CD4-positive, alpha-beta memory T cell (primary cell): ENCODE measurements at regions of chr22 and their contacts with region 1.

Region 1: GRCh38 chr22:30089655-30089974 is 9.4 kb downstream of the HORMAD2 start:
- DNase-seq: no peak
- H3K4me3 ChIP-seq: no peak overlapping the region
- H3K4me3 Mint-ChIP-seq: no peak overlapping the region
- H3K27ac ChIP-seq: no peak overlapping the region
- H3K27ac Mint-ChIP-seq: no peak overlapping the region
- H3K4me1 ChIP-seq: peaks cover 11% of the 10 kb centered on the region
- H3K4me1 Mint-ChIP-seq: peaks cover 7 to 12% (median 9%) of the 10 kb centered on the region in 4 donors
- H3K27me3 ChIP-seq: no peaks in the 10 kb centered on the region
- H3K27me3 Mint-ChIP-seq: peaks cover 1 to 2% of the 10 kb centered on the region in 2 donors

Region 2: DNA sequence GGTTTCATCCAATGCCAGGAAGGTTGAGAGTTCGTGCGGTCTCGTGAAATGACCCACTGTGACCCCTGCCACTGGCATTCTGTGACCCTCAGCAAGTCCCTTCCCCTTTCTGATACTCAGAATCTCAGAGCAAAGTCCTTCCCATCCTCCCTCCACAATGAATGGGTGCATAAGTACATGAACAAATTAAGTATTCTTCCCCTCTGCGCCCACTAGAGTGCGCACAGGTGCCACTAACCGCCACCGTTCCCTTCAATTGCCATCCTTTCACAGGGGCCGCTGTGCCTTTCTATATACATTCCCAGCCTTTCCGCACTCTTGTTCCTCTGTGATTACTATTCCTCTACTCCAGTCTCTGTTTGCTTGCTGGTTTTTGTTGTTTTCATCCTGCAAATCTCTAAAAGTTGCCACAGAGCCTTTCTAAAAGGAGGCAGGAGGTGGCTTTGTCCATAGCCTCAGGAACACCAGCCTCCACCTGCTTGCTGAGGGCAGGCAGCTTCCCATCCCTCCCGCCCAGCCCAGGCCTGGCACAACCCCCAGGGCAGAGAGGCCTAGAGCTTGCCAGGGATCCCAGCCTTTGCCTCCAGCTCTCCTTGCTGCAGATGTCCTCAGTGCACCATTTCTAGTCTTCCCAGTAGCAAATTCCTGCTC is 694.6 kb before region 1 on chr22:
- CTCF ChIA-PET with region 1: no interaction called
- POLR2A ChIA-PET with region 1: no interaction called
- intact Hi-C with region 1: loop called (anchors 2 kb)
- DNase-seq: peak; percentile 50 to 65 (median 60)
- H3K4me3 ChIP-seq: no peak overlapping the region
- H3K4me3 Mint-ChIP-seq: peak overlapping the region in 1 of 8 donors; percentile 3
- H3K27ac ChIP-seq: no peak overlapping the region
- H3K27ac Mint-ChIP-seq: peak overlapping the region in 1 of 7 donors; percentile 43
- H3K4me1 ChIP-seq: peaks cover 3% of the 10 kb centered on the region
- H3K4me1 Mint-ChIP-seq: peaks cover 5 to 11% (median 6%) of the 10 kb centered on the region in 4 donors
- H3K27me3 ChIP-seq: no peaks in the 10 kb centered on the region
- H3K27me3 Mint-ChIP-seq: no peaks in the 10 kb centered on the region

Region 3: GRCh38 chr22:29625090-29625825 is 464.4 kb before region 1 on chr22:
- CTCF ChIA-PET with region 1: interaction called, 10 read pairs
- POLR2A ChIA-PET with region 1: no interaction called
- intact Hi-C with region 1: no loop called
- DNase-seq: peak in 4 of 5 donors; percentile 33 to 48 (median 38)
- H3K4me3 ChIP-seq: no peak overlapping the region
- H3K4me3 Mint-ChIP-seq: peak overlapping the region in 3 of 8 donors; percentile 6 to 47 (median 6)
- H3K27ac ChIP-seq: no peak overlapping the region
- H3K27ac Mint-ChIP-seq: peak overlapping the region in 6 of 7 donors; percentile 8 to 88 (median 48)
- H3K4me1 ChIP-seq: peaks cover 41% of the 10 kb centered on the region
- H3K4me1 Mint-ChIP-seq: peaks cover 49 to 82% (median 64%) of the 10 kb centered on the region in 4 donors
- H3K27me3 ChIP-seq: no peaks in the 10 kb centered on the region
- H3K27me3 Mint-ChIP-seq: no peaks in the 10 kb centered on the region

Region 4: DNA sequence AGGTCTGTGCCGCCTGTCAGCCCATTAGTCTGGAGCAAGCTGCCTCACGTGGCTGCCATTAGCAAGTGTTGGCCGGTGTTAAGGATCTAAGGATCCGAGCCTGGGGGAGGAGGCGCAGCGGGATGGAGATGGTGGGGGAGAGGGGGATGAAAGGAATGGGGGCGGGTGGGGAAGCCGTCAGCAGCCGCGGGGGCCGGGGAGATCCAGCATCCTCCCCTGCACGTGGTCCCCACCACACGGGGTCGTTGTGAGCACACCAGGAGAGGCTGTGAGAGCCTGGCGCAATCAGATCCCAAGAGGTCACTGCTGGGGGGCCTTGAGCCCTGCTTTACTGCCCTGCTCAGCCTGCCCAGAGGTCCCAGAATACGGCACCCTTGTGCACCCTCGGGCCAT is 362.5 kb before region 1 on chr22:
- CTCF ChIA-PET with region 1: no interaction called
- POLR2A ChIA-PET with region 1: no interaction called
- intact Hi-C with region 1: loop called (anchors 2 kb)
- DNase-seq: no peak
- H3K4me3 ChIP-seq: no peak overlapping the region
- H3K4me3 Mint-ChIP-seq: no peak overlapping the region
- H3K27ac ChIP-seq: no peak overlapping the region
- H3K27ac Mint-ChIP-seq: no peak overlapping the region
- H3K4me1 ChIP-seq: no peaks in the 10 kb centered on the region
- H3K4me1 Mint-ChIP-seq: no peaks in the 10 kb centered on the region
- H3K27me3 ChIP-seq: no peaks in the 10 kb centered on the region
- H3K27me3 Mint-ChIP-seq: no peaks in the 10 kb centered on the region

Region 5: GRCh38 chr22:29883045-29883774 is 206.4 kb before region 1 on chr22 and contains the start of gene MTMR3:
- CTCF ChIA-PET with region 1: no interaction called
- POLR2A ChIA-PET with region 1: no interaction called
- intact Hi-C with region 1: loop called (anchors 5 kb)
- DNase-seq: peak; percentile 82 to 91 (median 86)
- H3K4me3 ChIP-seq: peak within 1 kb of the TSS; percentile 45 to 83
- H3K4me3 Mint-ChIP-seq: peak within 1 kb of the TSS; percentile 85 to 93 (median 91)
- H3K27ac ChIP-seq: peak within 1 kb of the TSS; percentile 82
- H3K27ac Mint-ChIP-seq: peak within 1 kb of the TSS; percentile 73 to 93 (median 89)
- H3K4me1 ChIP-seq: peaks cover 39% of the 10 kb centered on the region
- H3K4me1 Mint-ChIP-seq: peaks cover under 1 to 14% (median 8%) of the 10 kb centered on the region in 4 donors
- H3K27me3 ChIP-seq: no peaks in the 10 kb centered on the region
- H3K27me3 Mint-ChIP-seq: no peaks in the 10 kb centered on the region
- total RNA-seq, gene MTMR3: 65.3 to 68.6 TPM